WTC11 (cell line): ENCODE measurements at regions of chr1 and their contacts with region 1.

Region 1: DNA sequence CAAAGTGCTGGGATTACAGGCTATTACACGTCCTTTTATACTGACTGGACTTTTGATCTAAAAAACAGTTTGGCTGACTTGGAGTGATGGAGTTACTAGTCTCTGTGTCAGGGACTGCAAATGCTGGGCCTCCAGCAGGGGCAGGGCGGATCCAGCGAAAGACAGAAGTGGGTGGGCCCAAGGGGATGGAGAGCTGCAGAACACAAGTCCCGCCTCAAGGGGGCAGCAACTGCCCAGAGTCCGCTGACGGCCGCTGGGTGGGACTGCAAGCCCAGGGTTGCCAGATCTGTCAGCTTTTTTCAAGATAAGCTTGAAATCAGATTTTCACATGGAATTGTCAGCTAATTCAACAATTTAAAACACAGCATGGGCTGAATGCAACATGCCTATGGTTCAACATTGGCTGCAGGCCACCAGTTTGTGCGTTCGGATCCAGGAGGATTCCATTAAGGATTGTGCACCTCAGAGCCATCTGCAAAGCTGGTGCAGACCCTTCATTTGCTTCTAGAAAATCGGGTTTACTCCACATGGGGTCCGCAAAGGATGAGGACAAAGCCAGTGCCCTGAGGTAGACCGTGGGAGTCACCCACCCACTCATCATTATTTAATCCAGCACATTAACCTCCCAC is 10.7 kb downstream of the STMN1 start:
- DNase-seq: peak; percentile 94
- ATAC-seq: peak; percentile 81
- H3K4me3 Mint-ChIP-seq: no peak overlapping the region
- H3K27ac Mint-ChIP-seq: peak overlapping the region; percentile 54
- H3K4me1 Mint-ChIP-seq: peaks cover 19% of the 10 kb centered on the region
- H3K27me3 Mint-ChIP-seq: no peaks in the 10 kb centered on the region
- CTCF ChIP-seq: peak; percentile 94

Region 2: GRCh38 chr1:25711555-25712298 is 183.8 kb before region 1 on chr1:
- CTCF ChIA-PET with region 1: no interaction called
- POLR2A ChIA-PET with region 1: no interaction called
- DNase-seq: no peak
- ATAC-seq: no peak
- H3K4me3 Mint-ChIP-seq: no peak overlapping the region
- H3K27ac Mint-ChIP-seq: no peak overlapping the region
- H3K4me1 Mint-ChIP-seq: peaks cover 49% of the 10 kb centered on the region
- H3K27me3 Mint-ChIP-seq: no peaks in the 10 kb centered on the region
- CTCF ChIP-seq: no peak

Region 3: DNA sequence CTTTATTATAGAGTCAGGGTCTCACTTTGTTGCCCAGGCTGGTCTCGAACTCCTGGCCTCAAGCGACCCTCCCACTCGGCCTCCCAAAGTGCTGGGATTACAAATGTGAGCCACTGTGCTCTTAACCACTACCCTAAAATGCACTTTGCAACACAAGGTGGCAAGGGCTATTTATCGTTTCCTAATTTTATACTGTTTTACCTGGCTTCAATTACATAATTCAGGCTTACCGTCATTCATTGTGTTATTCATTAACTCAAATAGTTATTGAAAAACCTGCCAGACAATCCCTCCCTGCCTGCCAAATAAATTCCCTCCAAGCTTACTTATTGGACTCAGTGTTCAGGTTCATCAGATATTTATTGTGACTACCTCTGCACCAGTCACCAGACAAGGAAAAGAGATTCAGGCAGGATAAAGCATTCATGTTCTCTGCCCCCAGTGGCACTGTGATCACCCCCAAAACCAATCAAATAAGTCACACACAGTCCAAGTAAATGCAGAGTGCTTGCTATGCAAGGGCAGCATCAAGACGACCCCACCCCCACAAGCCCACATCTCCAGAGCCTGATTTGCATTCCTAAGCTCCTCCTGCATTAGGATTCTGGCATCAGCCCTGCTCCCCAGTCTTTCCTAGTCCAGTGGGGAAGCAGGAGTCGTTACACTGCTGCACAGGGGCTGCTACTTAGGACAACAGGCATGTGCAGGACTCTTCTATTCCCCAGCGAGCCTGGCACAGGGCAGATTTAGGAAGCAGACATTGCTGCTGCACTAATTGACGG is 28.1 kb before region 1 on chr1:
- CTCF ChIA-PET with region 1: interaction called, 12 read pairs
- POLR2A ChIA-PET with region 1: interaction called, 5 read pairs
- DNase-seq: peak; percentile 44
- ATAC-seq: peak; percentile 67
- H3K4me3 Mint-ChIP-seq: no peak overlapping the region
- H3K27ac Mint-ChIP-seq: peak overlapping the region; percentile 71
- H3K4me1 Mint-ChIP-seq: peaks cover 23% of the 10 kb centered on the region
- H3K27me3 Mint-ChIP-seq: no peaks in the 10 kb centered on the region
- CTCF ChIP-seq: no peak

Region 4: DNA sequence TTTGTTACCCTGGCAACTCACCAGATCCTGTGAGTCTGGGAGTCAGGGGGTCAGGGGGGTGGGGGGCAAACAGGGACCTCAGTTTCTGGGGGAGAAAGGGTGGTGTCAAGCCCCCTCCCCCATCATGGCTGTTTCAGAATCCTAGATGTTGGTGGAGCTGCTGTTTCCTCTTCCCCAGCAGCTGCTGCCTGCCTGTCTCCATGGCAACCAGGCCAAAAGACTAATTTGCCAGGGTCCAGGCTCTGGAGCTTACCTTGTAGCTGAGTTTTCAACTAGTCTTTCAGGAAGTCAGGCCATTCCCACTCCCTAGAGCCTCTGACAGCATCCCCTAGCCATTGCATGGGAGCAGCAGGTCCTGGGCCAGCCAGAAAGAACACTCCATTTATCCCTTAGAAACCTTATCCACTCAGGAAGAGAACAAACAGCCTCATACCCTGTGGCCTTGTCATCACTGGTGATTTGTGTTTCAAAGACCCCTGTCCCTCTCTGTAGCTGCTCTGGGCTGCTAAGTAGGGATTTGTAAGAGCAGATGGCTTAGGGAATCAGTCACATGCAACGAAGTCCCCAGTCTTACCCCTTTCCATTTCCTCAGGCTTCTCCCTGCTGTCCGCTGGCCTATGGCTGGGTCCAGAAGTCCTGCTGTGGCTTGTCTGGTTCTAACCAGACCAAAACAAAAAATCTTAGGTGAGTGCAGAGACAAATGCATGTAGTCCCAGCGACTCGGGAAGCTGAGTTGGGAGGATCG is 32.2 kb after region 1 on chr1:
- CTCF ChIA-PET with region 1: interaction called, 29 read pairs
- POLR2A ChIA-PET with region 1: no interaction called
- DNase-seq: peak; percentile 32
- ATAC-seq: peak; percentile 26
- H3K4me3 Mint-ChIP-seq: no peak overlapping the region
- H3K27ac Mint-ChIP-seq: no peak overlapping the region; the same call in 1 of the 2 replicates
- H3K4me1 Mint-ChIP-seq: peaks cover 25% of the 10 kb centered on the region
- H3K27me3 Mint-ChIP-seq: peaks cover 9% of the 10 kb centered on the region
- CTCF ChIP-seq: no peak

Region 5: GRCh38 chr1:25971066-25971810 is 75.8 kb after region 1 on chr1:
- CTCF ChIA-PET with region 1: interaction called, 17 read pairs
- POLR2A ChIA-PET with region 1: no interaction called
- DNase-seq: no peak
- ATAC-seq: peak; percentile 34; the same call in 1 of the 2 replicates
- H3K4me3 Mint-ChIP-seq: no peak overlapping the region
- H3K27ac Mint-ChIP-seq: no peak overlapping the region
- H3K4me1 Mint-ChIP-seq: peaks cover 8% of the 10 kb centered on the region
- H3K27me3 Mint-ChIP-seq: no peaks in the 10 kb centered on the region
- CTCF ChIP-seq: no peak

Region 6: DNA sequence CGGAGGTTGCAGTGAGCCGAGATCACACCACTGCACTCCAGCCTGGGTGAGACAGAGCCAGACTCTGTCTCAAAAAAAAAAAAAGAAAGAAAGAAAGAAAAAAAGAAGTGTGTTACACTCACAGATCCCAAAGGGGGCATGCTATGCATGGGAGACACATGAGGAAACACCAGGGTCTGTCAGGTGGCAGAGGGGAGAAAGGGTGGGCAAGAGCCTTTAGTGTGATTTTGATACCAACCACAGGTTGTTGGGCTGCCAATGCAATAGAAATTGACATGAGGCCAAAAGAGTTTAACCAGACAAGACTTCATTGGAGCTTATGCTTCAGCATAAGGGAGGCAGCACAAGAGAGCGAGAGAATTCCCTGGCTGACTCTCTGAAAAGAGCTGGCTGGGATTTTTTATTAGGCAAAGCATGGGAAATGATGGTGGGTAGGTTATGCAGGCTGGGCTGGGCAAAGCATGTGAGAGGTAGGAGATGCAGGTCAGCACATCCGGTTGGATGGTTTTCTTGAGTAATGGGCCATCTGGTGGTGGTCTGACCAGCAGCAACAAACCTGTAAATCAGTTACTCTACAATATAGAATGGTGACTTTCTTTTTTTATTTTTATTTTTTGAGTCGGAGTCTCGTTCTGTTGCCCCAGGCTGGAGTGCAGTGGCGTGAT is 114.4 kb after region 1 on chr1:
- CTCF ChIA-PET with region 1: interaction called, 58 read pairs
- POLR2A ChIA-PET with region 1: interaction called, 3 read pairs
- DNase-seq: peak; percentile 45
- ATAC-seq: peak; percentile 72
- H3K4me3 Mint-ChIP-seq: no peak overlapping the region
- H3K27ac Mint-ChIP-seq: no peak overlapping the region
- H3K4me1 Mint-ChIP-seq: peaks cover 22% of the 10 kb centered on the region
- H3K27me3 Mint-ChIP-seq: no peaks in the 10 kb centered on the region; the same call in 1 of the 2 replicates
- CTCF ChIP-seq: no peak

Region 7: DNA sequence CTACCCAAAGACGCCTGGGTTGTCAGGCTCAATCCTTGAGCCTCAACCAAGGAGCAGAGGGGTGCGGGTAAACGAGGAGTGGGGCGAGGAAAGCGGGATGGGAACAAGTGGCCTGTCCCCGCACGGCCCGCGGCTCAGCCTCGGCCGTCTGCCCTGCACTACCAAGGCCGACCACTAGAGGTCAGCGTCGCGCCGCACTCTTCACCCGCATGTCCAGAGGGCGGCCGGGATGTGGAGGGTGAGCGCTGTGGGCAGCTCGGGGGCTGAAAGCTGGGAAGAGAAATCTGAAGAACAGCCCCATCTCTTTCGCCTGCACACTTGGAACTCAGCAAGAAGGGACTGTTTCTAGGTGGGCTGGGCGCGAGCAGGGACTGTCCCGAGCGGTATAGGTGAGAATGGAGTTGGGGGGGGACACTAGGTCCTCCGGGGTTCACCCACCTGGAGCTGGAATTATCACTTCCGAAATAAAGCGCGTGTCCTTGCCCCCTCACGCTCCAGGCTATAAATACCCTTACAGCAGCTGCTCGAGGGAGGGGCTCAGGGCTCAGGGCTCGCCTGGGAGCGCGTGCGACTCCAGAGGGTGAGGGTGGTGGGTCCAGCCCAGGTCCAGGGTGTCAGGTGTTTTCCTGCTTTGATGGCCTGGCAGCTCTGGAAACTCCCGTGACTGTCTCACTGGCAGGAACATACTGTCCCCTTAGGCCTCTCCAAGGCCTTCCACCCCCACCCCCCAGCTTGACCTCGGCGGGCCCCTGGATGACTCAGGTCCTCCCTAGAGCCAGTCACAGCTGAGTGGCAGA is 140.7 kb after region 1 on chr1:
- CTCF ChIA-PET with region 1: interaction called, 26 read pairs
- POLR2A ChIA-PET with region 1: no interaction called
- DNase-seq: peak; percentile 86
- ATAC-seq: peak; percentile 78
- H3K4me3 Mint-ChIP-seq: peak overlapping the region; percentile 94
- H3K27ac Mint-ChIP-seq: no peak overlapping the region
- H3K4me1 Mint-ChIP-seq: peaks cover 8% of the 10 kb centered on the region
- H3K27me3 Mint-ChIP-seq: peaks cover 54% of the 10 kb centered on the region
- CTCF ChIP-seq: peak; percentile 100

Region 8: GRCh38 chr1:26459573-26460031 is 564.1 kb after region 1 on chr1:
- CTCF ChIA-PET with region 1: no interaction called
- POLR2A ChIA-PET with region 1: no interaction called
- DNase-seq: no peak
- ATAC-seq: no peak
- H3K4me3 Mint-ChIP-seq: no peak overlapping the region
- H3K27ac Mint-ChIP-seq: peak overlapping the region; percentile 26; the same call in 1 of the 2 replicates
- H3K4me1 Mint-ChIP-seq: no peaks in the 10 kb centered on the region
- H3K27me3 Mint-ChIP-seq: no peaks in the 10 kb centered on the region
- CTCF ChIP-seq: no peak